ENCODE measurements at regions of chr20 and their contacts with region 1.

Region 1: GRCh38 chr20:43824309-43825050 is 90.2 kb upstream of the TOX2 start:
- DNase-seq: no peak
- ATAC-seq: no peak
- H3K4me3 Mint-ChIP-seq: no peak overlapping the region
- H3K27ac Mint-ChIP-seq: no peak overlapping the region
- H3K4me1 Mint-ChIP-seq: peaks cover 12% of the 10 kb centered on the region
- H3K27me3 Mint-ChIP-seq: peaks cover 1% of the 10 kb centered on the region

Region 2: DNA sequence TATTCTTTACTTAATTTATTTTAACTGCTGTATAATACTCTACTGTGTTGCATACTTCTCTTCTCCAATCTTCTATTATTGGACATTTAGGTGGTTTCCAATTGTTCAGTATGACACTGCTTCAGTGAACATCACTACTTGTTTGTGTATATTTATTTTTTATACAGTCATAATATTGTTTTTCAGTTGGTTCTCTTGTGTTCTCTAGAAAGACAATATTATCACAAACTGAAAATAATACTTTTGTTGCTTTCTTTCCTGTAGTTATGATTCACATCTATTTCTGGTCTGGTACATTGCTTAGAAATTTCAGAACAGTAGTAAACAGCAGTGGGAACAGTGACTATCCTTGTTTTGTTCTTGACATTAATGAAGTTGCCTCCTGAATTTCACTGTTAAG is 34.9 kb before region 1 on chr20:
- CTCF ChIA-PET with region 1: no interaction called
- POLR2A ChIA-PET with region 1: no interaction called
- intact Hi-C with region 1: loop called in 1 of 2 experiments (anchors 5 kb)
- DNase-seq: no peak
- ATAC-seq: peak; percentile 51
- H3K4me3 Mint-ChIP-seq: no peak overlapping the region
- H3K27ac Mint-ChIP-seq: no peak overlapping the region
- H3K4me1 Mint-ChIP-seq: peaks cover 11% of the 10 kb centered on the region
- H3K27me3 Mint-ChIP-seq: peaks cover 3% of the 10 kb centered on the region

Region 3: GRCh38 chr20:43840382-43841070 is 16.0 kb after region 1 on chr20:
- CTCF ChIA-PET with region 1: interaction called, 11 read pairs
- POLR2A ChIA-PET with region 1: no interaction called
- intact Hi-C with region 1: no loop called
- DNase-seq: peak; percentile 66
- ATAC-seq: peak; percentile 63
- H3K4me3 Mint-ChIP-seq: no peak overlapping the region
- H3K27ac Mint-ChIP-seq: no peak overlapping the region
- H3K4me1 Mint-ChIP-seq: peaks cover 30% of the 10 kb centered on the region
- H3K27me3 Mint-ChIP-seq: peaks cover 7% of the 10 kb centered on the region

Region 4: DNA sequence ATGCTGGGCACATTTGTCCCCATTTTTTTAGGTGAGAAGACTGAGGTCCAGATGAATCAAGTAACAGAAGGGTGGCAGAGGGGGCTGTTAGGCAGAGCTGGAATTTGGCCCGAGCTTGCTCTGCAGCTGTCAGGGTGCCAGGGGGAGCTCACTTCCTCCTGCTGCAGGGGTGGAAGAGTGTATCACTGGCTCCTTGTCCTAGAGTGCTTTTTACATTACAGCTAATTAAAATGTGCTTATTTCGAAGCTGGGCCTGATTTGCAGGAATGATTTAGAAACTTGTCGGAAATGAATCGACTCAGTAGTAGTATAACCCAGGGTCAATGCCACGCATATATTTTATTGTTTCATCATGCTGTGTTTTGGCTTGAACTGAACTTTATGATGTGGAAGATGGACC is 101.3 kb after region 1 on chr20:
- CTCF ChIA-PET with region 1: no interaction called
- POLR2A ChIA-PET with region 1: no interaction called
- intact Hi-C with region 1: no loop called
- DNase-seq: peak; percentile 41
- ATAC-seq: peak; percentile 24
- H3K4me3 Mint-ChIP-seq: peak overlapping the region; percentile 8
- H3K27ac Mint-ChIP-seq: no peak overlapping the region
- H3K4me1 Mint-ChIP-seq: peaks cover 59% of the 10 kb centered on the region
- H3K27me3 Mint-ChIP-seq: peaks cover 27% of the 10 kb centered on the region